Calu3 (cell line): ENCODE measurements at regions of chr5 and their contacts with region 1.

Region 1: DNA sequence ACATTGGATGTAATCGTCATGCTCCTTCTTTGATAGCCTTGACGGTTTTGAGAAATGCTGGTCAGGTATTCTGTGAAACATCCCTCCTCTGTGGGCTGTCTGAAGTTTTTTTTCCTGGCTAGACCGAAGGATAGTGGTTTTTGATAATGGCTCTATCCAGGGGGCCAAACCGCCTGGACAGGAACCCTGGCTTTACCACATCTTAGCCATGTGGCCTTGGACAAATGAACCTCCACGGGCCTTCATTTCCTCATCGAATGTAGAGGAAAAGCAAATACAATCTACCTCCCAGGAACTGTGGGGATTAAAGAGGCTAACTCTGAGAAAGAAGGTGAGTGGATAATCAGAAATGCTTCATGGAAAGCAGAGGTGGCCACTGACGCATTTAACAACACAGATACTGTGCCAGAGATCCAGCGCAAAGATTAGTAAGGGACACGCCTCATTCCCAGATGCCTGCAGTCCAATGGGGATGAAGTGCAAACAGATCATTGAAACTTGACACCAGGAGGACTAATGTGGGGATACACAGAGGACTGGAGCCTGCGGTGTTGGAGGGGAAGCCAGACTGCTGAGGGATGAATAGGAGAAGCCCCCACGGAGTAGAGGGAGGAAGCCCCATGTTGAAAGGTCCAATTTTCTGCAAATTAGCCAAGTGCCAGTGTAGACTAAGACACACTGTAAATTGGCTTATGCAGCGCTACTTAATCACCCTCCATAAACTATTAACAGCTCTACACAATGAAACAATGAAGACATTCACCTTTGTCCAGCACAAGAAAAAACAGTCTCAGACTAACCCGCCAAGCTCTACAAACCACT is 41.6 kb downstream of the MYO10 start:
- DNase-seq: peak; percentile 75
- H3K4me3 Mint-ChIP-seq: peak overlapping the region; percentile 63
- H3K27ac Mint-ChIP-seq: peak overlapping the region; percentile 95
- H3K4me1 Mint-ChIP-seq: peaks cover 79% of the 10 kb centered on the region
- H3K27me3 Mint-ChIP-seq: no peaks in the 10 kb centered on the region
- CTCF ChIP-seq: no peak

Region 2: DNA sequence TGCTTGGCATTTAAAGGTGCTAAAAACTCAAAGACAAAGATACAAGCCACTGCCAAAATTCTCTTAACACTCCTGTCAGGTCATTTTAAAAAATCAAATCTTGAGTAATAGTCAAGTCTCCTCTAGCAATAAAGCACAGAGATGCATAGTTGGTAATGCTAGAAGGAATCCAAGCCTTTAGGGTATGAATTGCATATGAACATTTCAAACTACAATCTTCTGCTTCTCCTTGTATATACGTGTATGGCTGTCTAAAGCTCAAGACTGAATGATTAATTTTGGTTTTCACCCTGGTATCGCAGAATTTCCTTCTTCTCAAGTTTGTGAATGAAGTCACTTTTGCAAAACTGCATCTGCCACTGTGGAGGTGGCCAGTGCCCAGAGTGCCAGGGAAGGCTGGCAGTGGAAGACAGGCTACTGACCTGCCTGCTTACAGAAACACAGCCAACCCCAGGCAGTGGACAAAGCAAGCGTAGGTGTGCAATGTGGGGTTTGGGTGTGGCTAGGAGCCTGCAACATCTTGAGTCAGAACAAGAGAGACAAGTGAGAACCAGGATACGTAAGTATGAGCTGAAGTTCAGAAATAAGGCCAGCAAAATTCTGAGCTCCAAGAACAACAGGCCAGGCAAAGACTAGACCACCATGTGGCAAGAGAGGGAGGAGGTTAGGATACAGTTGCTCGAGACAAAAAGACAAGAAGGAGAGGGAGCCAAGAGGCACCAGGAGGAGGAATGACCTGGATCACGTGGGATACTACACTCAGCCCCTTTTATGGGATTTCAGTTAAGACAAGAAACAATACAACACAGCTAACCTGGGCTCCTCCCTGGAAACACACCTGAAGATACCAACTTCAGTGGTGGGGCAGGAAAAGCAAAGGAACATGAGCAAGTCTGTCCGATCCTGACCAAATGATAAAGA is 19.0 kb after region 1 on chr5:
- CTCF ChIA-PET with region 1: interaction called, 3 read pairs
- intact Hi-C with region 1: loop called (anchors 2 kb)
- DNase-seq: peak; percentile 63
- H3K4me3 Mint-ChIP-seq: peak overlapping the region; percentile 63
- H3K27ac Mint-ChIP-seq: peak overlapping the region; percentile 79
- H3K4me1 Mint-ChIP-seq: peaks cover 48% of the 10 kb centered on the region
- H3K27me3 Mint-ChIP-seq: no peaks in the 10 kb centered on the region
- CTCF ChIP-seq: no peak

Region 3: DNA sequence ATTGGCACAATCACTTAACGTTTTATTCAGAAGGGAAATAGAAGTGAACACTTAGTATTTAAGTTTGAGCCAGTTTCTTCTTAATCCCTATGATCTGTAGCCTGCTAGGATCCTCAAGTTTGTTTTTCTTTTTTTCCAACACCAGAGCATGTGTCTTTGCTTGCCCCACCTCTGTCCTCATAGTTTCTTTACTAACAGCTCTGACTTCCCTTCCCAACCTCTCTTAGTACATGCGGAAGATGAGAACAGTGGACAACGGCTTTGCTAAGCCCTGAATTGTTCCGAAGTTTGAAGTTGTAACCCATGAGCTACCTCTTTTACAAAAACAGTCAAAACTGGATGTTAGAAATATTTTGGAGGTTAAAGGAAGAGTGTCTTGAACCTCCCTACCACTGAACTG is 541.9 kb after region 1 on chr5:
- CTCF ChIA-PET with region 1: no interaction called
- intact Hi-C with region 1: no loop called
- DNase-seq: no peak
- H3K4me3 Mint-ChIP-seq: no peak overlapping the region
- H3K27ac Mint-ChIP-seq: no peak overlapping the region
- H3K4me1 Mint-ChIP-seq: no peaks in the 10 kb centered on the region
- H3K27me3 Mint-ChIP-seq: peaks cover 53% of the 10 kb centered on the region
- CTCF ChIP-seq: no peak